T-cell (primary cell): ENCODE measurements at regions of chr2 and their contacts with region 1.

Region 1: GRCh38 chr2:72719416-72719815 is 106.4 kb downstream of the EXOC6B start:
- DNase-seq: no peak
- ATAC-seq: no peak
- H3K4me3 ChIP-seq: no peak overlapping the region
- H3K4me3 Mint-ChIP-seq: no peak overlapping the region
- H3K27ac ChIP-seq: no peak overlapping the region
- H3K27ac Mint-ChIP-seq: no peak overlapping the region
- H3K4me1 ChIP-seq: no peaks in the 10 kb centered on the region
- H3K4me1 Mint-ChIP-seq: no peaks in the 10 kb centered on the region
- H3K27me3 ChIP-seq: no peaks in the 10 kb centered on the region
- H3K27me3 Mint-ChIP-seq: no peaks in the 10 kb centered on the region

Region 2: DNA sequence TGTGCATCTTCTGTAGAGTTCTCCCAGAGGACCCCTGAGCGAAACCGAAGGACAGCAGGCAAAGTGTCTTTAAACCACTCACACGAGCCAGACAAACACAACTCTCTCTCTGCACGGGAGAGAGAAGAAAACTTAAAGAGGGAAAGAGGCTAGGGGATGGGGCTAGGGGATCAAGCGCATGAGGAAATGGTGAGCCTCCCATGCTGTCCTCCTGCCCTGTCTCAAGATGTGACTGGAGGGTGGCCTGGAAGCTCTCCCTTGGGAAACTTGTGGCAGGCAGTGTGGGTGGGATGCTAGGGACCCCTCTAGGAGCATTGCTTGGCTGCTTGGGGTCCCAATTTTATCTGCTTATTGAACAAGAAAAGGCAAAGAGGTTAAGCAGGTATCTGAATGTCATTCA is 616.3 kb before region 1 on chr2:
- CTCF ChIA-PET with region 1: no interaction called
- POLR2A ChIA-PET with region 1: interaction called in 1 of 2 experiments, 12 read pairs
- DNase-seq: peak in 1 of 35 experiments; percentile 13
- ATAC-seq: no peak
- H3K4me3 ChIP-seq: no peak overlapping the region
- H3K4me3 Mint-ChIP-seq: no peak overlapping the region
- H3K27ac ChIP-seq: no peak overlapping the region
- H3K27ac Mint-ChIP-seq: no peak overlapping the region
- H3K4me1 ChIP-seq: no peaks in the 10 kb centered on the region
- H3K4me1 Mint-ChIP-seq: no peaks in the 10 kb centered on the region
- H3K27me3 ChIP-seq: peaks cover 3 to 14% of the 10 kb centered on the region in 2 experiments
- H3K27me3 Mint-ChIP-seq: peaks cover 13 to 25% of the 10 kb centered on the region in 2 donors

Region 3: GRCh38 chr2:72999729-73000725 is 280.6 kb after region 1 on chr2:
- CTCF ChIA-PET with region 1: no interaction called
- POLR2A ChIA-PET with region 1: interaction called in 1 of 2 experiments, 13 read pairs
- DNase-seq: no peak
- ATAC-seq: no peak
- H3K4me3 ChIP-seq: no peak overlapping the region
- H3K4me3 Mint-ChIP-seq: no peak overlapping the region
- H3K27ac ChIP-seq: no peak overlapping the region
- H3K27ac Mint-ChIP-seq: no peak overlapping the region
- H3K4me1 ChIP-seq: no peaks in the 10 kb centered on the region
- H3K4me1 Mint-ChIP-seq: no peaks in the 10 kb centered on the region
- H3K27me3 ChIP-seq: no peaks in the 10 kb centered on the region
- H3K27me3 Mint-ChIP-seq: no peaks in the 10 kb centered on the region